ENCODE measurements at regions of chr12 and their contacts with region 1.

Region 1: GRCh38 chr12:89470741-89471509 is 53.7 kb downstream of the GALNT4 start:
- DNase-seq: no peak
- H3K4me3 Mint-ChIP-seq: no peak overlapping the region
- H3K27ac Mint-ChIP-seq: peak overlapping the region; percentile 64
- H3K4me1 Mint-ChIP-seq: peaks cover 58% of the 10 kb centered on the region
- H3K27me3 Mint-ChIP-seq: no peaks in the 10 kb centered on the region

Region 2: GRCh38 chr12:89051065-89051677 is 419.8 kb before region 1 on chr12:
- CTCF ChIA-PET with region 1: interaction called, 12 read pairs
- POLR2A ChIA-PET with region 1: no interaction called
- intact Hi-C with region 1: no loop called
- DNase-seq: no peak
- H3K4me3 Mint-ChIP-seq: no peak overlapping the region
- H3K27ac Mint-ChIP-seq: no peak overlapping the region
- H3K4me1 Mint-ChIP-seq: peaks cover 13% of the 10 kb centered on the region
- H3K27me3 Mint-ChIP-seq: no peaks in the 10 kb centered on the region

Region 3: GRCh38 chr12:89524541-89525285 is 53.8 kb after region 1 on chr12 and contains the start of gene GALNT4:
- CTCF ChIA-PET with region 1: interaction called, 130 read pairs
- POLR2A ChIA-PET with region 1: interaction called, 13 read pairs
- intact Hi-C with region 1: loop called (anchors 1 kb)
- DNase-seq: peak; percentile 86
- H3K4me3 Mint-ChIP-seq: peak within 1 kb of the TSS; percentile 99
- H3K27ac Mint-ChIP-seq: peak within 1 kb of the TSS; percentile 98
- H3K4me1 Mint-ChIP-seq: peaks cover 45% of the 10 kb centered on the region
- H3K27me3 Mint-ChIP-seq: no peaks in the 10 kb centered on the region
- total RNA-seq, gene GALNT4: 5.8 to 6.0 TPM

Region 4: GRCh38 chr12:89529738-89530137 is 58.8 kb after region 1 on chr12:
- CTCF ChIA-PET with region 1: interaction called, 130 read pairs
- POLR2A ChIA-PET with region 1: interaction called, 13 read pairs
- intact Hi-C with region 1: loop called (anchors 1 kb)
- DNase-seq: no peak
- H3K4me3 Mint-ChIP-seq: no peak overlapping the region
- H3K27ac Mint-ChIP-seq: no peak overlapping the region
- H3K4me1 Mint-ChIP-seq: peaks cover 12% of the 10 kb centered on the region
- H3K27me3 Mint-ChIP-seq: no peaks in the 10 kb centered on the region

Measured in activated CD4-positive, alpha-beta memory T cell treated with anti-CD3 and anti-CD28 coated beads for 36 hours (primary cell).